Activated naive CD4-positive, alpha-beta T cell treated with anti-CD3 and anti-CD28 coated beads for 36 hours (primary cell): ENCODE measurements at regions of chr5 and their contacts with region 1.

Region 1: DNA sequence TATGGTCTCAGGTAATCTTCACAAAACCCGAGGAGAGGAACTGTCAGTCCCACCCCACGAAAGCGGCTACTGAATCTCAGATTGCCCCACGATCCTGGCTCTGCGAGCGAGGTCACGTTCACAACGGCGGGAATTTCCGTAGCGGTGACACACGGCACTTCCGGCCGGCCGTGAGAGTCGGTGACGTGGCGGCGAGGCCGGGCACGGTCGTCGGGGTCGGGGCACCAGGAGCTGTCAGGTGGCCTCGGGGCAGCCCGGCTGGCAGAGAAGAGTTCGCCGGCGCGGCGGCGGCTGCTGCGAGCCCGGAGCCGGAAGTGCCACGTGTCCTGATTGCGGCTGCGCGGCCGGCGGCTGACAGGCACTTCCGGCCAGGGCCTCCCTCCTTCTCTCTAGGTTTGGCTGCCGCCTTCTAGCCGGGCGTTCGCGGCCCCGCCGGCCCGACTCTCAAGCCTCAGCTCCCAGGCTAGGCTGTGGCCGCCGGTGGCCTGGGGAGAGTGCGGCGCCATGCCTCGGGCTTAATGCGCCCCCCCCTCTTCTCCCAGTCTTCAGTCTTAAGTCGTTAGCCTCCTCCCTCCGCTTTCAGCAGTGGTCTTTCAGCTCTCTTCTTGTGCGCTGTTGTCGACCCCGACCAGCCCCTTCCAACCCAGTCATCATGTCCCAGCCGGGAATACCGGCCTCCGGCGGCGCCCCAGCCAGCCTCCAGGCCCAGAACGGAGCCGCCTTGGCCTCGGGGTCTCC is at the start of gene SEC24A:
- DNase-seq: peak; percentile 92
- H3K4me3 Mint-ChIP-seq: peak within 1 kb of the TSS; percentile 89
- H3K27ac Mint-ChIP-seq: peak within 1 kb of the TSS; percentile 100
- H3K4me1 Mint-ChIP-seq: peaks cover 35% of the 10 kb centered on the region
- H3K27me3 Mint-ChIP-seq: no peaks in the 10 kb centered on the region
- total RNA-seq, gene SEC24A: 16.6 to 18.5 TPM

Region 2: DNA sequence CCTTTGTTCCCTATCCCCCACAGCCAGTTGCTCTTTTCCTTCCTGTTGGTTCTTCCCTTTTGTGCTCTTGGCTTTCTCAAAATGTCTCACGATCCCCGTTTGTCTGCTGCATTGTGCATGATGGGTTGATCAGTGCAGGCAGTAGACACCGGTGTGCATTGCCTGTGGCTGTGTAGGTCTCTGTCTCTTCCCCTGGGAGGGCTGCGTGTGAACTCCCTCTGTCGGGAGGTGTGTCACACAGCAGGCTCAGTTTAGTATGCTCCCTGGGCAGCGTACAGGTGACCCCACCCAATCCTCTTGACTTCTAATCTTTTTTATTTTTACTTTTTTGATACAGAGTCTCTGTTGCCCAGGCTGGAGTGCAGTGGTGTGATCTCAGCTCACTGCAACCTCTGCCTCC is 1301.6 kb before region 1 on chr5:
- CTCF ChIA-PET with region 1: no interaction called
- intact Hi-C with region 1: no loop called
- DNase-seq: peak; percentile 38
- H3K4me3 Mint-ChIP-seq: no peak overlapping the region
- H3K27ac Mint-ChIP-seq: no peak overlapping the region
- H3K4me1 Mint-ChIP-seq: no peaks in the 10 kb centered on the region
- H3K27me3 Mint-ChIP-seq: peaks cover 10% of the 10 kb centered on the region

Region 3: DNA sequence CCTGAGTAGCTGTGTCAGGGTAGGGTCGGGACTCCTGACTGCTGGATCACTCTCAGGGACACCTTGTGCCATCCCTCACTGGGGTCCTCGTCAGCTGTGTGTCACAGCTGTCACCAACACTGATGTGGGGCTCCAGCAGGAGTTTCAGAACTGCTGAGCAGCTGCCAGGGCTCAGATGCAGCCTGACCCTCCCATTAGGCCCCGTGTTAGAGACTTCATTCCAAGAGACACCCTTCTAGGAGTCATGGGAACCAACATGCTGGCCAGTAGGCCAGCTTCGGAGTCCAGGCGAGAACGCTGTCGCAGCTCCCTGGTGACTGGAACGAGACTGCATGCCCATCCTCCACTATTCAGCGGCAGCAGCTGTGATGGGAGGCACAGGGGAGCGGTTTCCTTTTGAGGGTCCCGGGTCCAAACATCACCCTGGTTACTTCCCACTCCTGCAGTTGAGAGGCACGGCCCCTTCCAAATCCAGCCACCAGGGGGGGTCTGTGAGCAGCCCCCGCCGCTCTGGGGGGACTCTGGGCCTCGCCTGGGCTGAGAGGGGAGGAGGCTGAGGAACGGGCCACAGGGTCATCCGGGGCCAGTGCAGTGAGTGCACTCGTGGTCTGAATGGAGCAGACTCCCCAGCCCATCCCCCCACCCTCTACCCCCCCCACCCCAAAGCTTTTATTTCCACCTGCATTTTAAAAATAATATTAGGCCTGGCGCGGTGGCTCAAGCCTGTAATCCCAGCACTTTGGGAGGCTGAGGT is 546.7 kb before region 1 on chr5:
- CTCF ChIA-PET with region 1: no interaction called
- intact Hi-C with region 1: loop called (anchors 5 kb)
- DNase-seq: peak; percentile 78
- H3K4me3 Mint-ChIP-seq: peak overlapping the region; percentile 12
- H3K27ac Mint-ChIP-seq: peak overlapping the region; percentile 24
- H3K4me1 Mint-ChIP-seq: peaks cover 95% of the 10 kb centered on the region
- H3K27me3 Mint-ChIP-seq: no peaks in the 10 kb centered on the region

Region 4: GRCh38 chr5:134370871-134371833 is 277.4 kb before region 1 on chr5 and contains the start of gene UBE2B:
- CTCF ChIA-PET with region 1: no interaction called
- intact Hi-C with region 1: loop called (anchors 1 kb)
- DNase-seq: peak; percentile 99
- H3K4me3 Mint-ChIP-seq: peak within 1 kb of the TSS; percentile 98
- H3K27ac Mint-ChIP-seq: peak within 1 kb of the TSS; percentile 99
- H3K4me1 Mint-ChIP-seq: peaks cover 58% of the 10 kb centered on the region
- H3K27me3 Mint-ChIP-seq: no peaks in the 10 kb centered on the region
- total RNA-seq, gene UBE2B: 116 to 129 TPM

Region 5: GRCh38 chr5:134603059-134603458 is 45.5 kb before region 1 on chr5:
- CTCF ChIA-PET with region 1: interaction called, 3 read pairs
- intact Hi-C with region 1: loop called (anchors 1 kb)
- DNase-seq: no peak
- H3K4me3 Mint-ChIP-seq: no peak overlapping the region
- H3K27ac Mint-ChIP-seq: no peak overlapping the region
- H3K4me1 Mint-ChIP-seq: peaks cover 42% of the 10 kb centered on the region
- H3K27me3 Mint-ChIP-seq: no peaks in the 10 kb centered on the region

Region 6: DNA sequence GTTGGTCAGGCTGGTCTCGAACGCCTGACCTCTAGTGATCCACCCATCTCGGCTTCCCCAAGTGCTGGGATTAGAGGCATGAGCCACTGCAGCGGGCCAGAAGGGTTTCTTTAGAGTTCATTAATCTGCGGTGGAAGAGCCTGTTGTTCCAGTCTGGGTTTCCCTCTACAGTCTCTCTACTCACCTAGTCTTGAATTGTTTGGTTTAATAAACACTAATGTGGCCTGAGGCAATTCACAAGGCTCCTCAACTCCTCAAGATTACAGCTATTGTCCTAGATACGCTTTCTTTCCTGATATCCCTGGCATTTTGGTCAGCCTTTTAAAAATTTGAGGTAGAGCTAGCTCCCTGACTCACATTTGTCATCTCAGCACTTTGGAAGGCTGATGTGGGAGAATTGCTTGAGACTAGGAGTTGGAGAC is 11.4 kb before region 1 on chr5:
- CTCF ChIA-PET with region 1: interaction called, 8 read pairs
- intact Hi-C with region 1: loop called (anchors 1 kb)
- DNase-seq: no peak
- H3K4me3 Mint-ChIP-seq: no peak overlapping the region
- H3K27ac Mint-ChIP-seq: no peak overlapping the region
- H3K4me1 Mint-ChIP-seq: peaks cover 7% of the 10 kb centered on the region
- H3K27me3 Mint-ChIP-seq: no peaks in the 10 kb centered on the region

Region 7: GRCh38 chr5:134714120-134714519 is 65.5 kb after region 1 on chr5:
- CTCF ChIA-PET with region 1: no interaction called
- intact Hi-C with region 1: no loop called
- DNase-seq: no peak
- H3K4me3 Mint-ChIP-seq: no peak overlapping the region
- H3K27ac Mint-ChIP-seq: no peak overlapping the region
- H3K4me1 Mint-ChIP-seq: no peaks in the 10 kb centered on the region
- H3K27me3 Mint-ChIP-seq: no peaks in the 10 kb centered on the region

Region 8: GRCh38 chr5:134813407-134813806 is 164.8 kb after region 1 on chr5:
- CTCF ChIA-PET with region 1: no interaction called
- intact Hi-C with region 1: loop called (anchors 1 kb)
- DNase-seq: peak; percentile 64
- H3K4me3 Mint-ChIP-seq: no peak overlapping the region
- H3K27ac Mint-ChIP-seq: peak overlapping the region; percentile 68
- H3K4me1 Mint-ChIP-seq: peaks cover 7% of the 10 kb centered on the region
- H3K27me3 Mint-ChIP-seq: no peaks in the 10 kb centered on the region

Region 9: GRCh38 chr5:134873987-134874830 is 225.6 kb after region 1 on chr5 and contains the start of gene TXNDC15:
- CTCF ChIA-PET with region 1: no interaction called
- intact Hi-C with region 1: loop called (anchors 1 kb)
- DNase-seq: peak; percentile 84
- H3K4me3 Mint-ChIP-seq: peak within 1 kb of the TSS; percentile 89
- H3K27ac Mint-ChIP-seq: peak within 1 kb of the TSS; percentile 92
- H3K4me1 Mint-ChIP-seq: peaks cover 30% of the 10 kb centered on the region
- H3K27me3 Mint-ChIP-seq: no peaks in the 10 kb centered on the region
- total RNA-seq, gene TXNDC15: 19.8 to 20.9 TPM